CD8-positive, alpha-beta T cell (primary cell): ENCODE measurements at regions of chr16 and their contacts with region 1.

Region 1: GRCh38 chr16:29862884-29863668 is at the start of gene CDIPT:
- DNase-seq: peak; percentile 87 to 98 (median 93)
- ATAC-seq: peak; percentile 97
- H3K4me3 ChIP-seq: peak within 1 kb of the TSS; percentile 81 to 96
- H3K4me3 Mint-ChIP-seq: peak within 1 kb of the TSS; percentile 94
- H3K27ac ChIP-seq: peak within 1 kb of the TSS; percentile 90 to 99
- H3K27ac Mint-ChIP-seq: peak within 1 kb of the TSS; percentile 100
- H3K4me1 ChIP-seq: peaks cover 19% of the 10 kb centered on the region
- H3K4me1 Mint-ChIP-seq: peaks cover 28% of the 10 kb centered on the region
- H3K27me3 ChIP-seq: no peaks in the 10 kb centered on the region
- H3K27me3 Mint-ChIP-seq: no peaks in the 10 kb centered on the region
- CTCF ChIP-seq: peak; percentile 42
- total RNA-seq, gene CDIPT: 24.5 to 26.4 TPM

Region 2: GRCh38 chr16:29745853-29746345 is 117.2 kb before region 1 on chr16 and contains the start of gene C16orf54:
- CTCF ChIA-PET with region 1: no interaction called
- POLR2A ChIA-PET with region 1: no interaction called
- intact Hi-C with region 1: loop called in 1 of 2 experiments (anchors 1 kb)
- DNase-seq: peak; percentile 88 to 98 (median 95)
- ATAC-seq: peak; percentile 81
- H3K4me3 ChIP-seq: peak within 1 kb of the TSS; percentile 90 to 93
- H3K4me3 Mint-ChIP-seq: peak within 1 kb of the TSS; percentile 94
- H3K27ac ChIP-seq: peak within 1 kb of the TSS; percentile 96 to 98
- H3K27ac Mint-ChIP-seq: peak within 1 kb of the TSS; percentile 96
- H3K4me1 ChIP-seq: peaks cover 62% of the 10 kb centered on the region
- H3K4me1 Mint-ChIP-seq: peaks cover 69% of the 10 kb centered on the region
- H3K27me3 ChIP-seq: no peaks in the 10 kb centered on the region
- H3K27me3 Mint-ChIP-seq: no peaks in the 10 kb centered on the region
- CTCF ChIP-seq: no peak
- total RNA-seq, gene C16orf54: 129 to 132 TPM

Region 3: DNA sequence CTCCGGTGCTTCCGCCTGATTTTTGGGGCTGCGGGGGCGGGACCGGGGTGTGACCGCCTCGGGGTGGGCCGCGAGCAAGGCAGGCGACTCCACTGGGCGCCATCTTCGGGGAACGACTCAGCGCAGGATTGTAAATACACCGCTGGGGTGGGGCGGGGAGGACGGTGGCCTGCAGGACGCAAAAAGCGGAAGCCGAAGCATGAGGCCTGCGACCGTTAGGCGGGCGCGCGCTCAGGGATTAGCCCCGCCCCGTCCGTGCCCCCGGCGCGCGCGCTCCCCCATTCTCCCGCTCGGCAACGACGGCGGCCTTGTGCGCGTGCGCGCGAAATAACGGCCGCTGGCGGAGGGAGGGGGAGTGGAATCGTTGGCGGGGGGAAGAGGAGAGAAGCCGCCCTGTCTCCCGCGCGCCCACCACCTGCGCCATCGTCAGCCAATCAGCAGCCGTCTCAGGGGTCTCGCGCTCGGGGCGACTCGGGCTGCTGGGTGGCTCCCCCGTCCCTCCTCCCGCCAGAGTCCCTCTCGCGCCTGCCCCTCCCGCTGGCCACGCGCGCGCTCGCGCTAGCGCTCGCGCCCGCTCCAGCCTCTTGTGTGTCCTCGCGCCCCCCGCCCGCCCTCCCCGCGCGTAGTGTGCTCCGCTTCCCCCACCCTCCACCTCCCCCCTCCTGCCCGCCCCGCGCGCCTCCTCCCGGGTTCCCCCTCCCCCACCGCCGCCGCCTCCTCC is 57.5 kb before region 1 on chr16:
- CTCF ChIA-PET with region 1: no interaction called
- POLR2A ChIA-PET with region 1: interaction called, 5 read pairs
- intact Hi-C with region 1: loop called (anchors 1 kb)
- DNase-seq: peak; percentile 95 to 99 (median 98)
- ATAC-seq: peak; percentile 60
- H3K4me3 ChIP-seq: peak overlapping the region; percentile 70 to 82
- H3K4me3 Mint-ChIP-seq: peak overlapping the region; percentile 99
- H3K27ac ChIP-seq: peak overlapping the region; percentile 86 to 87
- H3K27ac Mint-ChIP-seq: peak overlapping the region; percentile 100
- H3K4me1 ChIP-seq: peaks cover 42% of the 10 kb centered on the region
- H3K4me1 Mint-ChIP-seq: peaks cover 39% of the 10 kb centered on the region
- H3K27me3 ChIP-seq: no peaks in the 10 kb centered on the region
- H3K27me3 Mint-ChIP-seq: no peaks in the 10 kb centered on the region
- CTCF ChIP-seq: no peak

Region 4: GRCh38 chr16:29848420-29849297 is 14.4 kb before region 1 on chr16:
- CTCF ChIA-PET with region 1: interaction called, 16 read pairs
- POLR2A ChIA-PET with region 1: interaction called, 5 read pairs
- intact Hi-C with region 1: loop called in 1 of 2 experiments (anchors 1 kb)
- DNase-seq: peak; percentile 62 to 92 (median 84)
- ATAC-seq: peak; percentile 98
- H3K4me3 ChIP-seq: no peak overlapping the region
- H3K4me3 Mint-ChIP-seq: no peak overlapping the region
- H3K27ac ChIP-seq: no peak overlapping the region
- H3K27ac Mint-ChIP-seq: no peak overlapping the region
- H3K4me1 ChIP-seq: no peaks in the 10 kb centered on the region
- H3K4me1 Mint-ChIP-seq: peaks cover 3% of the 10 kb centered on the region
- H3K27me3 ChIP-seq: no peaks in the 10 kb centered on the region
- H3K27me3 Mint-ChIP-seq: no peaks in the 10 kb centered on the region
- CTCF ChIP-seq: peak; percentile 78

Region 5: GRCh38 chr16:29926005-29926710 is 63.1 kb after region 1 on chr16 and contains the start of gene KCTD13:
- CTCF ChIA-PET with region 1: no interaction called
- POLR2A ChIA-PET with region 1: interaction called, 4 read pairs
- intact Hi-C with region 1: loop called (anchors 1 to 2 kb)
- DNase-seq: peak; percentile 82 to 98 (median 88)
- ATAC-seq: peak; percentile 93
- H3K4me3 ChIP-seq: peak within 1 kb of the TSS; percentile 90 to 92
- H3K4me3 Mint-ChIP-seq: peak within 1 kb of the TSS; percentile 96
- H3K27ac ChIP-seq: peak within 1 kb of the TSS; percentile 73
- H3K27ac Mint-ChIP-seq: peak within 1 kb of the TSS; percentile 95
- H3K4me1 ChIP-seq: peaks cover 21% of the 10 kb centered on the region
- H3K4me1 Mint-ChIP-seq: peaks cover 37% of the 10 kb centered on the region
- H3K27me3 ChIP-seq: no peaks in the 10 kb centered on the region
- H3K27me3 Mint-ChIP-seq: no peaks in the 10 kb centered on the region
- CTCF ChIP-seq: no peak
- total RNA-seq, gene KCTD13: 39.7 to 41.6 TPM

Region 6: GRCh38 chr16:29973384-29974246 is 110.5 kb after region 1 on chr16 and contains the start of gene TAOK2:
- CTCF ChIA-PET with region 1: interaction called, 3 read pairs
- POLR2A ChIA-PET with region 1: interaction called, 4 read pairs
- intact Hi-C with region 1: loop called in 1 of 2 experiments (anchors 1 kb)
- DNase-seq: peak; percentile 80 to 97 (median 91)
- ATAC-seq: peak; percentile 87
- H3K4me3 ChIP-seq: peak within 1 kb of the TSS; percentile 81 to 98
- H3K4me3 Mint-ChIP-seq: peak within 1 kb of the TSS; percentile 91
- H3K27ac ChIP-seq: peak within 1 kb of the TSS; percentile 64 to 79
- H3K27ac Mint-ChIP-seq: peak within 1 kb of the TSS; percentile 89
- H3K4me1 ChIP-seq: peaks cover 26% of the 10 kb centered on the region
- H3K4me1 Mint-ChIP-seq: peaks cover 34% of the 10 kb centered on the region
- H3K27me3 ChIP-seq: no peaks in the 10 kb centered on the region
- H3K27me3 Mint-ChIP-seq: no peaks in the 10 kb centered on the region
- CTCF ChIP-seq: no peak
- total RNA-seq, gene TAOK2: 12.2 to 12.8 TPM

Region 7: DNA sequence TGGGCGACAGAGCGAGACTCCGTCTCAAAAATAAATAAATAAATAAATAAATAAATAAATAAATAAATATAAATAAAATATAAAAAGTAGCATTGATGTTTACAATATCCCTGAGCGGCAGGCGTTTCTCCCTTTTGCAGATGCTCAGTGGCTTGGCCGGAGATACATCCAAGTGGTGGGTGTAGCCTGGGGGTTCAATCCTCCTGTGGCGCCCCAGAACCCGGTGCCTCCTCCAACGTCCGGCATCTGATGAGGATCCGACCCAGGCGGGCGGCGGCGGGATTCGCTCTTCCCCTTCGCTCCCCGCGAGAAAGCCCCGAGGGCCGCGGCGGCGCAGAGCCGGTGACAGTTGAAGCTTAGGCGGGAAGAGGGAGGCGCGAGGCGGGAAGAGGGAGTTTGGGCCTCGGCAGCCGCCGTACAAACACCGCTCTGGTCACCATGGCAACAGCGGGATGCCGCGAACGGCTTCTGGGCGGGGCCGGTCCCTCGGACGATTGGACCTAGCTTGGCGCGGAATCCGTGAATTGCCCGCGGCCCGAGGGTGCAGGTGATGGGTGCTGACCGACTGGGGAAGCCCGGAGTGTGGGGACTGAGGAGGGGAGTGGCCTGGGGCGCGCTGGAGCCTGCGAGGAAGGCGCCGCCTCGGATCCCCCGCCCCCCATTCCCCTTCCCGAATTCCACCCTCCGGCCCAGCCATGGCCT is 189.7 kb after region 1 on chr16:
- CTCF ChIA-PET with region 1: no interaction called
- POLR2A ChIA-PET with region 1: no interaction called
- intact Hi-C with region 1: loop called in 1 of 2 experiments (anchors 1 kb)
- DNase-seq: peak; percentile 69 to 93 (median 90)
- ATAC-seq: peak; percentile 86
- H3K4me3 ChIP-seq: peak overlapping the region; percentile 55 to 74
- H3K4me3 Mint-ChIP-seq: peak overlapping the region; percentile 84
- H3K27ac ChIP-seq: no peak overlapping the region
- H3K27ac Mint-ChIP-seq: no peak overlapping the region
- H3K4me1 ChIP-seq: peaks cover 6% of the 10 kb centered on the region
- H3K4me1 Mint-ChIP-seq: peaks cover 17% of the 10 kb centered on the region
- H3K27me3 ChIP-seq: no peaks in the 10 kb centered on the region
- H3K27me3 Mint-ChIP-seq: no peaks in the 10 kb centered on the region
- CTCF ChIP-seq: no peak